ENCODE measurements at regions of chr1 and their contacts with region 1.

Region 1: GRCh38 chr1:10788592-10789006 is 7.8 kb downstream of the CASZ1 start:
- DNase-seq: peak; percentile 70 to 88 (median 82)
- ATAC-seq: peak; percentile 90 to 96 (median 92)
- H3K4me3 ChIP-seq: peak overlapping the region in 6 of 12 donors; percentile 9 to 30 (median 20)
- H3K27ac ChIP-seq: peak overlapping the region in 10 of 12 donors; percentile 7 to 95 (median 52)
- H3K4me1 ChIP-seq: peaks cover 0 to 93% (median 44%) of the 10 kb centered on the region in 12 donors
- H3K27me3 ChIP-seq: peaks cover 0 to 38% (median 0%) of the 10 kb centered on the region in 9 donors
- CTCF ChIP-seq: peak in 11 of 12 donors; percentile 48 to 74 (median 52)
- POLR2A ChIP-seq: no peak

Region 2: DNA sequence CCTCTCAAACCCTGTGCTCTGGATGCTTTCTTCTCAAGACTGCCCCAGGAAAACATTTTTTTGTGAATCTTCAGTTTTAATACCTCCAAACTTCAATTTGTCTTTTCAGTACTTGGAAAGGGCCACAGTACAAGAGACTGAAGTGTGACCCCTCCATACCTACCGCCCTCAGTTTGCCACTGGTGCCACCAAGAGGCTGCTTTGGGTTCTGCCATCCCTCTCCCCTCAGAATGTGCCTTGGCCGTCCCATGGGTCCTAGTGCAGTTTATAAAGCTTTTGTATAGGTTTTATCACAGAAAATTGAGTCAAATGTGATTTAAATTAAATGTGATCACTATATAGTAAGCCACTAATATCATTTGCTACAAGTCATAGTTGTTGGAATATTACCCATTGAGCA is 450.6 kb before region 1 on chr1:
- intact Hi-C with region 1: no loop called
- DNase-seq: peak in 4 of 5 donors; percentile 33 to 54 (median 43)
- ATAC-seq: peak; percentile 83 to 91 (median 86)
- H3K4me3 ChIP-seq: no peak overlapping the region
- H3K27ac ChIP-seq: peak overlapping the region in 2 of 12 donors; percentile 36 to 48
- H3K4me1 ChIP-seq: peaks cover 0 to 25% (median 12%) of the 10 kb centered on the region in 12 donors
- H3K27me3 ChIP-seq: no peaks in the 10 kb centered on the region
- CTCF ChIP-seq: peak; percentile 48 to 78 (median 72)
- POLR2A ChIP-seq: no peak

Region 3: DNA sequence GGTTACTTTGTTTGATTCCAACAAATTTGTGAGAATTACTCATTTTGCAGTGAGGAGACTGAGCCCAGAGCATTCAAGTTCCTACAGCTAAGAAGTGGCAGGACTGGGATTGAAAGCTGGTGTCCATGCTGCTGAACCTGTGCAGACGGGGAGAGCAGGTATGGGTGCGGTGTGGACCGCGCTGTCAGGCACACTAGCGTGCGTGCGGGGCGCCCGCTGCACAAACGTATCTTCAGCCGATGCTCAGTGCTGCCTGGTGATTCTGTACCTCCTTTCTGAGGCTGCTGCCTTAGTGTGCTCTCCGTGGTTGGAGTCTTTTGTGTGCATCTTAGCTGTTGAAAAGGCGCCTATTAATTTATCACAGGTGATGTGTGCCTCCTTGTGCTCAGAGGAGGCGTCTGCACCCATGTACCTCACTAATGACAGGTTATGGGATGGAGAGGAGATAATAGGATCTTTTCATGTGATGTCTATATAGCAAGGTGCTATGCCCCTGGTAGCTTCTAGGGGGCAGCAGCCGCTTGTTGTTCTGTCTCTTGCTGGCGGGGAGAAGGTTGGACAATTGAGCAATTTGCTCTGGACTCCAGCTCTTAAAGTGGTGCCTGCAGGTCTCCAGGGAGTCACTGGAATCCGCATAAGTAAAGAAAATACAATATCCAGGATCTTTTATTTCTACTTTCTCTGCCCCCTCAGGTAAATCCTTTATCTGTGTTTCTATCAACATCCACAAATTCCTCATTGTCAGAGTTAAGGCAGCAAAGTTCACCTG is 281.3 kb before region 1 on chr1:
- intact Hi-C with region 1: loop called in 2 of 10 experiments (anchors 10 kb)
- DNase-seq: peak; percentile 49 to 71 (median 66)
- ATAC-seq: peak; percentile 71 to 90 (median 85)
- H3K4me3 ChIP-seq: no peak overlapping the region
- H3K27ac ChIP-seq: no peak overlapping the region
- H3K4me1 ChIP-seq: peaks cover 0 to 37% (median 26%) of the 10 kb centered on the region in 12 donors
- H3K27me3 ChIP-seq: no peaks in the 10 kb centered on the region
- CTCF ChIP-seq: peak; percentile 73 to 90 (median 80)
- POLR2A ChIP-seq: no peak

Region 4: GRCh38 chr1:10694633-10695627 is 93.7 kb before region 1 on chr1:
- intact Hi-C with region 1: loop called in 7 of 10 experiments (anchors 2 to 5 kb)
- DNase-seq: peak; percentile 92 to 95 (median 94)
- ATAC-seq: peak; percentile 72 to 85 (median 76)
- H3K4me3 ChIP-seq: peak overlapping the region; percentile 32 to 89 (median 56)
- H3K27ac ChIP-seq: peak overlapping the region; percentile 76 to 94 (median 88)
- H3K4me1 ChIP-seq: peaks cover 4 to 72% (median 41%) of the 10 kb centered on the region in 12 donors
- H3K27me3 ChIP-seq: no peaks in the 10 kb centered on the region
- CTCF ChIP-seq: no peak
- POLR2A ChIP-seq: no peak

Region 5: GRCh38 chr1:10731041-10731440 is 57.6 kb before region 1 on chr1:
- intact Hi-C with region 1: loop called in 2 of 10 experiments (anchors 10 kb)
- DNase-seq: no peak
- ATAC-seq: no peak
- H3K4me3 ChIP-seq: no peak overlapping the region
- H3K27ac ChIP-seq: peak overlapping the region in 2 of 12 donors; percentile 13
- H3K4me1 ChIP-seq: peaks cover 0 to 72% (median 34%) of the 10 kb centered on the region in 12 donors
- H3K27me3 ChIP-seq: no peaks in the 10 kb centered on the region
- CTCF ChIP-seq: no peak
- POLR2A ChIP-seq: no peak

Region 6: DNA sequence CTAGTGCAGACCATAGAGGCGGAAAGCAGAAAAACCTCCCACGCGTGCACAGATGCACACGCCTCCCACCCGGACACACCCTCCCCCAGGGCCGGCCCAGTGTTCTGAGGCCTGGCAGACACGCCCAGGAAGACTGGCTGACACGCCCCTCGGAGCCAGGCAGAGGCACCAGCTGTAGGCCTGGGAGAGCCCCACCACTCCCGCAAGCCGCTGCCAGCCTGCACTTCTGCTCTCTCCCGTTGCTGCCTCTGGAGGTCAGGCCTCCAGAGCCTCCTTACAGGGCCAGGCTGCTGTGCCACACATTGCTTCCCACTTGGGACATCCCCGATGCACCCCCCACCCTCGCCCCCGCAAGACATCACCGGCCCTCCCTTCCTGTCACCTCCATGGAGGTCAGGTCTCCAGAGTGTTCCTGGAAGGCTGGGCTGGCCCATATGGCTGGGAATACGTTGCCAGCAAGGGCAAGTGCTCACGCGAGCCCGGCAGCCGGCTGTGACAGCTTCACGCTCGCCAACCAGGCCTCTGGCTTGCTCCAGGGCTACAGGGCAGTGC is 32.6 kb before region 1 on chr1:
- intact Hi-C with region 1: loop called in 2 of 10 experiments (anchors 5 kb)
- DNase-seq: peak; percentile 74 to 85 (median 82)
- ATAC-seq: peak; percentile 77 to 90 (median 82)
- H3K4me3 ChIP-seq: no peak overlapping the region
- H3K27ac ChIP-seq: peak overlapping the region; percentile 37 to 77 (median 69)
- H3K4me1 ChIP-seq: peaks cover 4 to 70% (median 41%) of the 10 kb centered on the region in 12 donors
- H3K27me3 ChIP-seq: no peaks in the 10 kb centered on the region
- CTCF ChIP-seq: peak in 1 of 12 donors; percentile 15
- POLR2A ChIP-seq: no peak